ENCODE measurements at regions of chr4 and their contacts with region 1.

Region 1: DNA sequence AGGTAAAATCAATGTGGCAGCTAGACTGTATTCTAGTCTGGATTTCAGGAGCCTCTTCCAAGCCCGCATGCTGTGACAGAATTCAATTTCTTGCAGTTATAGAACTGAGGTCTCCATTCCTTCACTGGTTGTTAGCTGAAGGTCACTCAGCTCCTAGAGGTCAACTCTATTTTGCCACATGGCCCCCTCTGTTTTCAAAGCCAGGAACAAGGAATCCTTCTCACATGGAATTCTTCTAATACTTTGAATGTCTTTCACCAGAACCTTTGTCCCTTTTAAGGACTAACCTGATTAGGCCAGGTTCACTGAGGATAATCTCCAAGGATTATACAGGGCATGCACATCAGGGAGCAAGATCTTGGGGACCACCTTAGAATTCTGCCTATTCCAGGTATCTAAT is 23.4 kb upstream of the MMRN1 start:
- DNase-seq: no peak
- ATAC-seq: no peak
- H3K4me3 ChIP-seq: no peak overlapping the region
- H3K4me3 Mint-ChIP-seq: no peak overlapping the region
- H3K27ac ChIP-seq: no peak overlapping the region
- H3K27ac Mint-ChIP-seq: no peak overlapping the region
- H3K4me1 ChIP-seq: no peaks in the 10 kb centered on the region
- H3K4me1 Mint-ChIP-seq: peaks cover under 1% of the 10 kb centered on the region
- H3K27me3 ChIP-seq: no peaks in the 10 kb centered on the region
- H3K27me3 Mint-ChIP-seq: peaks cover 4% of the 10 kb centered on the region
- CTCF ChIP-seq: no peak

Region 2: DNA sequence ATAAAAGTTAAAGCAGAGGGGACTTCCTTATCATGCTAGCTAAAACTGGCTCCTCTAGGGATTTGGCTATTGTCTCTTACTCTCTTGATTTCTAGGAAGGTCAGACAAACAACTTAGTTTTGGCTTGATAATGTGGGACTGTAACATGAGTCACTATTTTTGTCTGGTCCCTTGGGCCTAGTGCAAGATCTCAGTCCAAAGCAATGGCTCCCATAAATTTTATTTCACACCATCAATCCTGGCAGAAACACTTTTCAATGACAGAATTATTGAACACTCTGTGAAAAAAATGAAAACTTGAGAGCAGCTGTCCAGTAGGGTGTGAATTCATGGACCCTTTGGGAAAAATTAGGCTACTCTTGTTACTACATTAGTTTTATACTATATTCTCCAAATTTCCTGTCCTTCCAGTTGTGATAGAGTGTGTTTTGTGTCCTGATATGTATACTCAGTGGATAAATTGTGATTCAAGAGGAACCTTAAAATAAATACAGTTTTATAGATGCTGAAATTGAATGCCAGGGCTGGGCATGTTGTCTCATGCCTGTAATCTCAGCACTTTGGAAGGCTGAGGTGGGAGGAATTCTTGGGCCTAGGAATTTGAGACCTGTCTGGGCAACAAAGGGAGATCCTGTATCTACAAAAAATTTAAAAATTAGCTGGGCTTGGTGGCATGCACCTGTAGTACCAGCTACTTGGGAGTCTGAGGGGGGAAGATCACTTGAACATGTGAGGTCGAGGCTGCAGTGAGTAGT is 23.5 kb before region 1 on chr4:
- CTCF ChIA-PET with region 1: no interaction called
- POLR2A ChIA-PET with region 1: no interaction called
- intact Hi-C with region 1: loop called in 1 of 2 experiments (anchors 1 kb)
- DNase-seq: no peak
- ATAC-seq: no peak
- H3K4me3 ChIP-seq: no peak overlapping the region
- H3K4me3 Mint-ChIP-seq: no peak overlapping the region
- H3K27ac ChIP-seq: no peak overlapping the region
- H3K27ac Mint-ChIP-seq: no peak overlapping the region
- H3K4me1 ChIP-seq: no peaks in the 10 kb centered on the region
- H3K4me1 Mint-ChIP-seq: no peaks in the 10 kb centered on the region
- H3K27me3 ChIP-seq: no peaks in the 10 kb centered on the region
- H3K27me3 Mint-ChIP-seq: no peaks in the 10 kb centered on the region
- CTCF ChIP-seq: no peak

Region 3: GRCh38 chr4:89929425-89930159 is 58.4 kb after region 1 on chr4:
- CTCF ChIA-PET with region 1: no interaction called
- POLR2A ChIA-PET with region 1: no interaction called
- intact Hi-C with region 1: no loop called
- DNase-seq: peak in 2 of 9 experiments; percentile 50 to 70
- ATAC-seq: peak; percentile 91
- H3K4me3 ChIP-seq: peak overlapping the region in 1 of 2 experiments; percentile 17
- H3K4me3 Mint-ChIP-seq: peak overlapping the region; percentile 58
- H3K27ac ChIP-seq: peak overlapping the region in 1 of 2 experiments; percentile 48
- H3K27ac Mint-ChIP-seq: peak overlapping the region; percentile 56
- H3K4me1 ChIP-seq: peaks cover 9% of the 10 kb centered on the region
- H3K4me1 Mint-ChIP-seq: peaks cover 14% of the 10 kb centered on the region
- H3K27me3 ChIP-seq: no peaks in the 10 kb centered on the region
- H3K27me3 Mint-ChIP-seq: peaks cover 2% of the 10 kb centered on the region
- CTCF ChIP-seq: no peak

Region 4: DNA sequence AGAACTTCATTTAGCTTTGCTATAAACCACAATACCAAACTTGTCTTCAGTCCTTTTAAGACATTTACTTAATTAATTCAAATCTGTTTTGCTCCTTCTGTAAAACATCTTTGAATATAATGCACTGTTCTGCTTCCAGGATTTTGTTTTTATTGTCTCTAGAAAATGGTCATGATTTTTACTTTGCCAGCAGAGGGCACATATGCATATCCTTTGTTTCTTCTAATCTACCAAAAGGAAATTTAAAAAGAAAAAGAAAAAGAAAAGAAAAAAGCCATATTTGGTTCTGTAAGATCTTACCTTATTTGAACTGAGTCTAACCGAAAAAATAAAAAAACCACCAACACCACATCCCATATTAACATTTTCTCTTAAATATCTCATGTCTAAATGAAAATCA is 154.0 kb after region 1 on chr4:
- CTCF ChIA-PET with region 1: no interaction called
- POLR2A ChIA-PET with region 1: no interaction called
- intact Hi-C with region 1: no loop called
- DNase-seq: no peak
- ATAC-seq: no peak
- H3K4me3 ChIP-seq: no peak overlapping the region
- H3K4me3 Mint-ChIP-seq: no peak overlapping the region
- H3K27ac ChIP-seq: no peak overlapping the region
- H3K27ac Mint-ChIP-seq: no peak overlapping the region
- H3K4me1 ChIP-seq: no peaks in the 10 kb centered on the region
- H3K4me1 Mint-ChIP-seq: no peaks in the 10 kb centered on the region
- H3K27me3 ChIP-seq: no peaks in the 10 kb centered on the region
- H3K27me3 Mint-ChIP-seq: no peaks in the 10 kb centered on the region
- CTCF ChIP-seq: no peak